AG04450 (cell line): ENCODE measurements at regions of chr5 and their contacts with region 1.

Region 1: DNA sequence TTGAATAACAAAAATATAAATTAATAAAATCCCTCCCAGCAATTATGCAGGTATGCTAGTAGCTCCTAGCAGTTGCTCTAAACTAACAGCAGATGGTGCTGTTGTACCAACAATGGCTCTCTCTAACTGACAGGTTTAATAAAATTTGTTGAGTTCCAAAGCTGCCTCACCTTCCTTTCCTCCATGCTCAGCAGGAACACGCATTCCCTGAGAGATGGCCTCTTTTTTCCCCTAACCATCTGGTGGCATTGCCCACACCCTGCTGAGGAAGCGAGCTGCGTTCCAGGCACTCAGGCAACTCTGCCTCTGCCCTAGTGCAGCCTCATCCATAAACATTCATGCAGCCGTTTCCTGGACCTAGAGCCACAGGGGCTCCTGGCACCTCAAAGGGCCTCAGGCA is 106.2 kb downstream of the KLHL3 start:
- DNase-seq: no peak
- H3K4me3 ChIP-seq: no peak overlapping the region
- H3K27ac ChIP-seq: no peak overlapping the region
- H3K27me3 ChIP-seq: no peaks in the 10 kb centered on the region
- CTCF ChIP-seq: peak; percentile 88

Region 2: DNA sequence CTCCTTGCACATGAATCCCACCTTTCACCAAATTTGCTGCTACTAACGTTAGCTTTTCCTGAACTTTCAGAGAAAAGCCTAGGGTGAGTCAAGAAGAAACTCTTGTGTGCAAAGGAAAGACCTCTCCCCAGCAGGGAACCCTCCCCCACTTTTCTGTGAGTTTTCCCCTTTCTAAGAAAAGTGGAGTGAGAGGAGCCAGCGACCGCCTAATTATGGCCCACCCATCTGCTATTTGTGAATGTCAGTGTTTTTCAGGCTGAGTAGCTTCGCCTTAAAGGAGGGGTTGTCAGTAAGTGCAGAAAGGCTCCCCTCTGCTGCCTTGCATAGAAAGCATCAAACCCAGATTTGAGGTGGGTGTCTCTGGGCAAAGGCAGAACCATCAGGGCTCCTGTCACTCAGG is 83.7 kb before region 1 on chr5:
- CTCF ChIA-PET with region 1: no interaction called
- POLR2A ChIA-PET with region 1: no interaction called
- DNase-seq: no peak
- H3K4me3 ChIP-seq: no peak overlapping the region
- H3K27ac ChIP-seq: no peak overlapping the region
- H3K27me3 ChIP-seq: no peaks in the 10 kb centered on the region
- CTCF ChIP-seq: no peak

Region 3: GRCh38 chr5:137619191-137619870 is 10.3 kb before region 1 on chr5:
- CTCF ChIA-PET with region 1: interaction called, 27 read pairs
- POLR2A ChIA-PET with region 1: no interaction called
- DNase-seq: peak; percentile 18
- H3K4me3 ChIP-seq: no peak overlapping the region
- H3K27ac ChIP-seq: no peak overlapping the region
- H3K27me3 ChIP-seq: no peaks in the 10 kb centered on the region
- CTCF ChIP-seq: no peak

Region 4: GRCh38 chr5:137641148-137641547 is 11.5 kb after region 1 on chr5:
- CTCF ChIA-PET with region 1: interaction called, 36 read pairs
- POLR2A ChIA-PET with region 1: no interaction called
- DNase-seq: no peak
- H3K4me3 ChIP-seq: no peak overlapping the region
- H3K27ac ChIP-seq: no peak overlapping the region
- H3K27me3 ChIP-seq: no peaks in the 10 kb centered on the region
- CTCF ChIP-seq: no peak

Region 5: DNA sequence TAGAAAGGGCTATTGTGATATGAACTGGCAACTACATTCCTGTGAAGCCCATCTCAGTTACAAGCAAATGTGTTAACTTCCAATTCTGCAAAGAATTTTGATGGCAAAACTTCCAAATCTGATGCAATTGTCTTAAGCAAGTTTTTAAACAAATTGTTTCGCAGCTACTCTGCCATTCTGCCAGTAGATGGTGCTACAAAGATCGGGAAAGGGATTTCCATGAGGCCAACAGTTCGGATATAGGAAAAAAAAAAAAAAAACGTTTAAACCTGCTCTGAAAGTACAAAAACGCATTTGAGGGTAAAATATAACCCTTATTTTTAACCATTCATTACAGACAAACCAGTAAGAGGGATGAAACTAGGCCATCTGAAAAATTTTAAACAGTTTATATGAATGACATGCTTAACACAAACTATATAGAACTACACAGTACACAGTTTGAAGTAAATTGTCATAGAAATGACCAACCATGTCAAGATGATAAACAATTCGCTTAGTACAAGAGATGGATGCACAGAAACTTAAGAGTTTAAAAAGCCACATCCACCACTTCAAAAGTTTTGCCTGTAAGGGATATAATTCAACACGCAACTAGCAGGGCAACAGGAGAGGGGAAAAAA is 122.3 kb after region 1 on chr5:
- CTCF ChIA-PET with region 1: interaction called, 17 read pairs
- POLR2A ChIA-PET with region 1: no interaction called
- DNase-seq: no peak
- H3K4me3 ChIP-seq: peak overlapping the region; percentile 94
- H3K27ac ChIP-seq: no peak overlapping the region
- H3K27me3 ChIP-seq: no peaks in the 10 kb centered on the region
- CTCF ChIP-seq: peak; percentile 84

Region 6: DNA sequence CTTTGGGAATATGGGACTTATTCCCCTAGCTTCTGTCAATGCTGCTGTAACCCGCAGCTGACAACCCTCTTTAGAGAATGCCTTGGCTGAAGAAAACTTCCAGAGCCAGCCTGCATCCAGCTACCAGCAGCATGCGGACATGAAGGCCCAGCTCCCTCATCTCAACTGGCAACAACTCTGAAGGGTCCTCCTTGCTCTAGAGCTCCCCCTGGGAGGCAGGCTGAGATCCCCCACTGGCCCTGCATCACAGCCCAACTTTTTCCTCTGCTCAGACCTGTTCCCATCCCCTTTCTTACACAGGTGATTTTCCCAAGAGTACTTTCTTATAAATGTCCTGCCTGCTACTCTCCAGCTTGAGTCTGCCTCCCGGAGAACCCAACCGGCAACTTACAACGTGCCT is 435.5 kb after region 1 on chr5:
- CTCF ChIA-PET with region 1: interaction called, 15 read pairs
- POLR2A ChIA-PET with region 1: no interaction called
- DNase-seq: no peak
- H3K4me3 ChIP-seq: no peak overlapping the region
- H3K27ac ChIP-seq: no peak overlapping the region
- H3K27me3 ChIP-seq: peaks cover 4% of the 10 kb centered on the region
- CTCF ChIP-seq: peak; percentile 33